ENCODE measurements at regions of chr16 and their contacts with region 1.

Region 1: DNA sequence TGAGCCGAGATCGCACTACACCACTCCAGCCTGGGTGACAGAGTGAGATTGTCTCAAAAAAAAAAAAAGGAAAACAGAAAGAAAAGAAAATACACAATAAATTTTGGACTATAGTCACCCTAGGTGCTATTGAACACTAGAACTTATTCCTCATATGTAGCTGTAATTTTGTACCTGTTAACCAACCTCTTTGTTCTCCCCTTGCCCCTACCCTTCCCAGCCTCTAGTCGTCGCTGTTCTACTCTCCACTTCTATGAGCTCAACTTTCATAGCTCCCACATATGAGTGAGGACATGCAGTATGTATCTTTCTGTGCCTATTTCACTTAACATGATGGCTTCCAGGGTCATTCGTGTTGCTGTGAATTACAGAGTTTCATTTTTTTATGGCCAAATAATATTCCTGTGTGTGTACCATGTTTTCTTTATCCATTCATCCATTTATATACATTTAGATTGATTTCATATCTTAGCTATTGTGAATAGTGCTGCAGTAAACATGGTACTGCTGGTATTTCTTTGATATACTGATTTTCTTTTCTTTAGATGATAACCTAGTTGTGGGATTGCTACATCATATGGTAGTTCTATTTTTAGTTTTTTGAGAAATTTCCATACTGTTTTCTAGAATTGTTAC is 28.3 kb downstream of the VPS35L start:
- DNase-seq: peak in 1 of 2 experiments; percentile 36
- H3K4me3 ChIP-seq: no peak overlapping the region
- H3K4me3 Mint-ChIP-seq: no peak overlapping the region
- H3K27ac Mint-ChIP-seq: no peak overlapping the region
- H3K4me1 ChIP-seq: no peaks in the 10 kb centered on the region
- H3K4me1 Mint-ChIP-seq: no peaks in the 10 kb centered on the region
- H3K27me3 ChIP-seq: no peaks in the 10 kb centered on the region
- H3K27me3 Mint-ChIP-seq: no peaks in the 10 kb centered on the region
- CTCF ChIP-seq: peak; percentile 75 to 87

Region 2: DNA sequence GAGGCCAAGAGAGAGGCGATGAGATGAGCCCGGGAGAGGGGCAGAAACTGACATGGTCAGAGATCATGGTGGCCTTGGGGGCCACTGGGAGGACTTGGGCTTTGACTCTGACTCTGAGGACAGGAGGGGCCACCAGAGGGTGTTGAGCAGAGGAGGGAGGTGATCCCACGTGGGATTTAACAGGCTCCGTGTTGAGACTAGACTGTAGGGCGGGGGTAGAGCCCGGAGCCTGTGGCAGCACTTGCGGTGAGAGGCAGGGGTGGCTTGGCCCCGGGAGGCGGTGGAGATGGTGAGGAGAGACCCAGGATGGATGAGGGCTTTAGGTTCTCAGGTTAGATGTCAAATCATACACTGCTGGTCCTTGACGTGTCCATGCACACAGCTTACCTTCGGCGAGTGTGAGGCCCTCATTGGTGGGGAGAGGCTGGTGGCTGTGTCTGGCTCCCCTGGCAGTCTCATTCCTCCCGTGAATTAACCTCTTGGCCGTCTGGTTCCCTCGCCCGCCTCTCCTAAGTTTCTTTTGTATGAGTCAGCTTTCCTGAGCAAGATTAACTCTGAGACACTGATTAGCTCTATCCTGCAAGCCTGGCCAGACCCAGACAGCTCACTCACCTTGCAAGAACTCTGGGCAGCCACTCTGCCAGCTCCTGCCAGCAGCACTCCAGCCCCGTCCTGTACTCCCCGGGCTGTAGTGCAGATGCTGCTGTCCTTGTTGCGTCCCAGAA is 11.4 kb after region 1 on chr16:
- CTCF ChIA-PET with region 1: interaction called, 21 read pairs
- POLR2A ChIA-PET with region 1: no interaction called
- intact Hi-C with region 1: no loop called
- DNase-seq: peak; percentile 11 to 33
- H3K4me3 ChIP-seq: no peak overlapping the region
- H3K4me3 Mint-ChIP-seq: no peak overlapping the region
- H3K27ac Mint-ChIP-seq: no peak overlapping the region
- H3K4me1 ChIP-seq: no peaks in the 10 kb centered on the region
- H3K4me1 Mint-ChIP-seq: peaks cover 6% of the 10 kb centered on the region
- H3K27me3 ChIP-seq: no peaks in the 10 kb centered on the region
- H3K27me3 Mint-ChIP-seq: no peaks in the 10 kb centered on the region
- CTCF ChIP-seq: no peak

Region 3: DNA sequence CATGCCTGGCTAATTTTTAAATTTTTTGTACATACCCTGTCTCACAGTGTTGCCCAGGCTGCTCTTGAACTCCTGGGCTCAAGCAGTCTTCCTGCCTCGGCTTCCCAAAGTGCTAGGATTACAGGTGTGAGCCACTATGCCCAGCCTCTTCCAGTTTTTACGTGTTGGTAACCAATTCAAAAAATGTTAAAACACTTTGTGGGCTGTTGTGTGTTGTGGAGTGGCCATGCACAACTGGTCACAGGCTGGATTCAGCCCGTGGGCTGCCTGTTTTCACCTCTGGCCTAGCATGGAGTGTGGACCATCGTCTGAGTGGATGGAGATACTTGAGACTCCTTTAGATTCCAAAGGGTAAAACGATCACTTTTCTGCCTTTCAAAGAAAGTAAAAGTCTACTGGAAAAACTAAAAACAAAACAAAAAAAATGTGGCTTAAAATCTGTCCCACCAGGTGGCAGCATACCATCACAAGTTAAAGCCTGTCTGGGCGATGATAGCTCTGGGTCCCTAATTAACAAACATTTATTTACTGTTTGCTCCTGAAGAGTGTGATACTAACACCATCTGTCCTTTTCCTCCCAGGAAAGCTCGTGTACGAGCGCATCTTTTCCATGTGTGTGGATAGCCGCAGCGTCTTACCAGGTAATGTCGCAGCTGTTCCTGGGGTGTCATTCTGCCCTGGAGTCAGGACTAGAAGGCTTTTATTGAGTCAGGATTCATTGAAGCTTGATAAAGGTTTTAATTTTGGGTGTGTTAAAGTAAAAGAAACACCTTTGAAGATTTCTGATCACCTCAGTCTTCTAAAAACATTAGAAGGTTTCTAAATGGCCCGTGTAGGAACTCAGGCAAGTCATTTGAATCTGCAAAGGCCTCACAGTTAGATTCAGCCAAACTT is 17.5 kb after region 1 on chr16:
- CTCF ChIA-PET with region 1: interaction called, 21 read pairs
- POLR2A ChIA-PET with region 1: no interaction called
- intact Hi-C with region 1: no loop called
- DNase-seq: peak in 1 of 2 experiments; percentile 50
- H3K4me3 ChIP-seq: no peak overlapping the region
- H3K4me3 Mint-ChIP-seq: no peak overlapping the region
- H3K27ac Mint-ChIP-seq: no peak overlapping the region
- H3K4me1 ChIP-seq: peaks cover 6% of the 10 kb centered on the region; the same call in 1 of the 2 replicates
- H3K4me1 Mint-ChIP-seq: no peaks in the 10 kb centered on the region
- H3K27me3 ChIP-seq: no peaks in the 10 kb centered on the region
- H3K27me3 Mint-ChIP-seq: no peaks in the 10 kb centered on the region
- CTCF ChIP-seq: peak; percentile 52 to 77

Region 4: GRCh38 chr16:19898924-19899604 is 315.3 kb after region 1 on chr16:
- CTCF ChIA-PET with region 1: interaction called, 13 read pairs
- POLR2A ChIA-PET with region 1: no interaction called
- intact Hi-C with region 1: no loop called
- DNase-seq: peak; percentile 57 to 70
- H3K4me3 ChIP-seq: no peak overlapping the region
- H3K4me3 Mint-ChIP-seq: no peak overlapping the region
- H3K27ac Mint-ChIP-seq: no peak overlapping the region
- H3K4me1 ChIP-seq: no peaks in the 10 kb centered on the region
- H3K4me1 Mint-ChIP-seq: peaks cover 7% of the 10 kb centered on the region
- H3K27me3 ChIP-seq: no peaks in the 10 kb centered on the region
- H3K27me3 Mint-ChIP-seq: peaks cover 9% of the 10 kb centered on the region
- CTCF ChIP-seq: peak; percentile 60 to 75

Region 5: GRCh38 chr16:19907161-19907992 is 323.6 kb after region 1 on chr16:
- CTCF ChIA-PET with region 1: interaction called, 13 read pairs
- POLR2A ChIA-PET with region 1: no interaction called
- intact Hi-C with region 1: no loop called
- DNase-seq: peak; percentile 50 to 75
- H3K4me3 ChIP-seq: no peak overlapping the region
- H3K4me3 Mint-ChIP-seq: no peak overlapping the region
- H3K27ac Mint-ChIP-seq: no peak overlapping the region
- H3K4me1 ChIP-seq: no peaks in the 10 kb centered on the region
- H3K4me1 Mint-ChIP-seq: peaks cover 7% of the 10 kb centered on the region
- H3K27me3 ChIP-seq: no peaks in the 10 kb centered on the region
- H3K27me3 Mint-ChIP-seq: peaks cover 9% of the 10 kb centered on the region
- CTCF ChIP-seq: peak; percentile 88 to 97

Measured in Caco-2 (cell line).